ENCODE measurements at regions of chr18 and their contacts with region 1.

Region 1: GRCh38 chr18:68648191-68648590 is 66.7 kb downstream of the TMX3 start:
- H3K4me3 ChIP-seq: no peak overlapping the region
- H3K27ac ChIP-seq: no peak overlapping the region
- H3K4me1 ChIP-seq: no peaks in the 10 kb centered on the region
- CTCF ChIP-seq: no peak

Region 2: DNA sequence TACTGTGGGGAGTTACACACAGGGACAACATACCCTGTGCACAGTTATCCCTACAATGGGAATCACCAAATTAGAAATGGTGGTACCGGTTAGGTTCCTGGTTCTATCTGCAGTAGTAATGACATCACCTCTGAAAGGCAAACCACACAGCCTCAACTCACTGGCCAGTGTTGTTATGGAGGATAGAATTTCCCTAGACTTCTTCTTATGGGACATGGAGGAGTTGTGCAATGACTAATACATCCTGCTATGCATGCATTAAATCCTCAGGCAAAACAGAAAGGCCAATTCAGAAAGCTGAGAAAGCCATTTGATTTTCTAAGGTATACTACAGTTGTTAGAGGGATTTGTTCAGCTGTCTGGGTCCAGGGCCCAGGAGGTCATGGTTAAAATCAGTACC is 372.6 kb before region 1 on chr18:
- CTCF ChIA-PET with region 1: no interaction called
- POLR2A ChIA-PET with region 1: no interaction called
- H3K4me3 ChIP-seq: no peak overlapping the region
- H3K27ac ChIP-seq: no peak overlapping the region
- H3K4me1 ChIP-seq: no peaks in the 10 kb centered on the region
- CTCF ChIP-seq: no peak

Region 3: DNA sequence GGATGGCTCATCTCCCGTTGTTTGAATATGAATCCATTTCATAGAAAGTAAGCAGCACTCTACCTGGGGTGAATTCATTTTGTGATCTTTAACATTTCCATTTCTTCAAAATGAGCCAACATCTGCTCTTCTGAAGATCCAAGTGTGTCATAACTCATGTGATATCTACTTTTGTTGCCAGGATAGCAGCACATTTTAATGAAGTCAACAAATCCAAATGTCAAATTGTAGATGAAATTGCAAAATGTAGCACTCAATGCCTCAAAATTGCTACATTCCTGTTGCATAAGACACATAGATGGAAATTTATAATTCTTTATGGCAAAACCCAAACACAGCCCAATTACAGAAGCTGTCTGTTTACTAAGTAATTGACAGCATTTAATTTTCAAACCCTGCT is 294.0 kb before region 1 on chr18:
- CTCF ChIA-PET with region 1: no interaction called
- POLR2A ChIA-PET with region 1: no interaction called
- H3K4me3 ChIP-seq: no peak overlapping the region
- H3K27ac ChIP-seq: no peak overlapping the region
- H3K4me1 ChIP-seq: no peaks in the 10 kb centered on the region
- CTCF ChIP-seq: no peak

Region 4: GRCh38 chr18:68583685-68584084 is 64.5 kb before region 1 on chr18:
- CTCF ChIA-PET with region 1: no interaction called
- POLR2A ChIA-PET with region 1: no interaction called
- H3K4me3 ChIP-seq: no peak overlapping the region
- H3K27ac ChIP-seq: no peak overlapping the region
- H3K4me1 ChIP-seq: no peaks in the 10 kb centered on the region
- CTCF ChIP-seq: no peak

Region 5: DNA sequence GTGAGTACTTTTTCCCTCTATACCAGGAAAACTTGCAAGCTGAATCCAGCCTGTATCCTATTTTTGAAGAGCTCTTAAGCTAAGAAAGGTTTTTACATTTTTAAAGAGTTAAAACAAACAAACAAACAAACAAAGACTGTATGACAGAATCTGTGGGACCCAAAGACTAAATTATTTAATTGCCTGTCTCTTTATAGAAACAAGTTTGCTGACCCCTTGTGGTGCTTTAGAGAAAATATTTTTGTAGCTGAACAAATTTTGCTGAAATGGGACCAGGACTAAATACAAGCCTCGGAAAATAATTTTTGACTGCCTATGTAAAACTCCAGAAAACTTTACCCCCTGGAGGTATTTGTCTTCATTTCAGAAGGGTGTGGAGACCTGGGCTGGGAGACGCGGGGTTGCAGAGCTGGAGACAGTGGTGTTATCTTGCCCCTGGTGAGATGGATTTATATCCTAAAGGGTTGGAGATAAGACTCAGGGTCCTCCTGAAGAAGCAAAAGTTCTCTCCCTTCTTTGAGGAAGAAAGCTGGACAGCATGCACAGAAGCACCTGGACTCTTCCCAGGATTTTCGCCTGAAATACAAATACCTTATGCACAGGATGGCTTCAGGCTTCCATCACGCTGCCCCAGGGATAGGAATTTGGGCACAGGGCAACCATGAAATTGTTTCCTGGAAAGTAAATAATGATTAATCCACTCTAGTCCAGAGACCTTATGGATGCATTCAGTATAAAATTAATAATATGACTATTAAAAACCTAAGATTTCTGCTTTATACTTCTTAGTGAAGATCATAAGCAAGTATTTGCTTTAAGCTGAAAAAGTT is 12.4 kb after region 1 on chr18:
- CTCF ChIA-PET with region 1: interaction called, 17 read pairs
- POLR2A ChIA-PET with region 1: no interaction called
- H3K4me3 ChIP-seq: no peak overlapping the region
- H3K27ac ChIP-seq: no peak overlapping the region
- H3K4me1 ChIP-seq: no peaks in the 10 kb centered on the region
- CTCF ChIP-seq: no peak